AG04450 (cell line): ENCODE measurements at regions of chr17 and their contacts with region 1.

Region 1: DNA sequence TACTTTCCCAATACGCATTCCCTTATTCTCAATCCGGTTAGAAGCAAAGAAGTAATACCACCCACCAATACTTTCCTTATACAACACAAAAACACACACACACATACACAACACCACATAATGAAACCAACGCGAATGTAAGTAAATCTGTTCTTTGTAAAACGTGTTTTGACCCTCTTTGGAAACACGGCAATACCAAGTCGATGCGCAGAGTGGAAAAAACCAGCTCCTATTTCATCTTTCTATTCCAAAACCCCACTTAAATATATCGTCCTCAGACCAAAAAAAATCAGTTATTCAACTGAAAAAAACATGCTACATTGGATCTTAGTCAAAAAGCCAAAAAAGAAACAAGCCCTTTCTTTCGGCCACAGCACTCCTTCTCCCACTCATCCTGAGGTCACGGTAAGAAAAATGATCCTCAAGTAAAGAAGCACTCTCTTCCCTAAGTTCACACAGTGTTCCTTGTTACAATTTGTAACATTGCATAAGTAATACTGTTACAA is 31.0 kb upstream of the ARL4D start:
- DNase-seq: peak; percentile 97
- H3K4me3 ChIP-seq: peak overlapping the region; percentile 35
- H3K27ac ChIP-seq: peak overlapping the region; percentile 97
- H3K27me3 ChIP-seq: no peaks in the 10 kb centered on the region
- CTCF ChIP-seq: no peak

Region 2: DNA sequence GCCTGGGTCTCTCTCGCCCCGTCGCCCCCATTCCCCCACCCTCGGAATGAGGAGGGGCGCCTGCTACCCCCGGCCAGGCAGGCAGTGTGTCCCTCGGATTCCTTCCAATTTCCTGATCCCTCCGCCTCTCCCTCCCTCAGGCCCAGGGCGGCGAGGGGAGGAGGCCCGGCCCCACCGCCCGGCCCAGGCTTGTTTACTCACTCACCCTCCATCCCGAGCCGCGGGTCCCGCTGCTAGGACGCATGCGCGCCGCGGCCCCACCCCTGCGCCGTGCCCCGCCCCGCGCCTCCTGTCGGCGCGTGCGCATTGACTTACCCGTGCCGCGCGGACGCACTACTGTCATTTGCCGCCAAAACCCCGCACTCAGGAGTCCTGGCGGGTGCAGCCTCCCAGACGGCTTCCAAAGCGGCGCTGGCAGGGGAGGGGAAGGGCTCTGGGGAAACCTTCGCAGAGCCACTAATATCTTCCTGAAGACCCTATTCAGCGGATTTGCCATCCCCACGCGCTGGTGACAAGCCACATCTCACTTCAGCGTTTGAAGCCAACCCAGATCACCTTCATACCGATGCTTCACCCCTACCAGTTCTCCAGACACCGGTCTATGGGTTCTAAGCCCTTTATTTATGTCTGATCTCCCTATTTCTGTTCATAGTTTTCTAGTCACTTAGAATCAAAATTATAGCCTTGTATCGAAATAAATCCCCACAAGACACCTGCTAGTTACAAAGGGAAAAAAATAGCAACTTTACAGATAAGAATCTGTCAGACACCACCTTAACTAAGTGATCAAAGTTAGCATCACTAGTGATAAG is 622.8 kb before region 1 on chr17 and contains the start of gene EZH1:
- CTCF ChIA-PET with region 1: no interaction called
- POLR2A ChIA-PET with region 1: no interaction called
- DNase-seq: peak; percentile 61
- H3K4me3 ChIP-seq: peak within 1 kb of the TSS; percentile 84
- H3K27ac ChIP-seq: peak within 1 kb of the TSS; percentile 78
- H3K27me3 ChIP-seq: no peaks in the 10 kb centered on the region
- CTCF ChIP-seq: no peak
- polyA plus RNA-seq, gene EZH1: 18.8 and 26.3 TPM in 2 replicates

Region 3: DNA sequence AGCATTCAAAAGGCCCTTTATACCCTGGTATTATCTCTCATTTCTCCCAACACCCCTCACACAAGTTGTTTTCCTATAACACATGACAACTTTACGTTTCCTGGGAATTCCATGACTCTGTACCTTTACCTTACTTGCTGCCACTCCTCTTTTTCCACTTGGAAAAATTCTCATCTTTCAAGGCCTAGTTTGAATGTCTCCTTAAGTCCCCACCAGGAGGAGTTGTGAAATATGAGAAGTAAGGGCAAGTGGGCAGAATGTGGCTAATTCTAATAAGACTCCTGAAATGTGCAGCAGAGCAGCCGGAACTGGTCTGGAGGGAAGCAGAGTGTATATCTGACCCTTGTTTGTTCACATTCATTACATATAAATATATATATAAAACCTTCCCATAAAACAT is 282.3 kb before region 1 on chr17:
- CTCF ChIA-PET with region 1: no interaction called
- POLR2A ChIA-PET with region 1: no interaction called
- DNase-seq: no peak
- H3K4me3 ChIP-seq: no peak overlapping the region
- H3K27ac ChIP-seq: no peak overlapping the region
- H3K27me3 ChIP-seq: no peaks in the 10 kb centered on the region
- CTCF ChIP-seq: peak; percentile 29

Region 4: GRCh38 chr17:43224146-43224695 is 143.6 kb before region 1 on chr17:
- CTCF ChIA-PET with region 1: no interaction called
- POLR2A ChIA-PET with region 1: no interaction called
- DNase-seq: no peak
- H3K4me3 ChIP-seq: no peak overlapping the region
- H3K27ac ChIP-seq: no peak overlapping the region
- H3K27me3 ChIP-seq: no peaks in the 10 kb centered on the region
- CTCF ChIP-seq: no peak

Region 5: DNA sequence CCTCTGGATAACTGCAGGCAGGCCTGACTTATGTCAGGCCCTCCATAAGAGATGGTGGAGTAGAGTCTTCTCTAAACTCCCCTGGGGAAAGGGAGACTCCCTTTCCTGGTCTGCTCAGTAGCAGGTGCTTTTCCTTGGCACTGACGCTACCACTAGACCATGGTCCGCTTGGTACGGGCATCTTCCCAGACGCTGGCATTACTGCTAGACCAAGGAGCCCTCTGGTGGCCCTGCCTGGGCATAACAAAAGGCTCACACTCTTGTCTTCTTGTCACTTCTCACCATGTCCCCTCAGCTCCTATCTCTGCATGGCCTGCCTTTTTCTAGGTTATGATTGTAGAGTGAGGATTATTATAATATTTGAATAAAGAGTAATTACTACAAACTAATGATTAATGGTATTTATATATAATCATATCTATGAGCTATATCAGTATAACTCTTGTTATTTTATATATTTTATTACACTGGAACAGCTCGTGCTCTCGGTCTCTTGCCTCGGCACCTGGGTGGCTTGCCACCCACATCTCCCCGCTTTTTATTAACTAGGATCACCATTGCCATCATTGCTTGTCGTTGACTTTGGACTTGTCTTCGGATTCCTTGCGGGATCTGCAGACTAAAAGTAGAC is 28.8 kb before region 1 on chr17:
- CTCF ChIA-PET with region 1: interaction called, 4 read pairs
- POLR2A ChIA-PET with region 1: interaction called, 15 read pairs
- DNase-seq: no peak
- H3K4me3 ChIP-seq: no peak overlapping the region
- H3K27ac ChIP-seq: no peak overlapping the region
- H3K27me3 ChIP-seq: no peaks in the 10 kb centered on the region
- CTCF ChIP-seq: peak; percentile 77

Region 6: GRCh38 chr17:43388359-43389045 is 20.7 kb after region 1 on chr17:
- CTCF ChIA-PET with region 1: interaction called, 5 read pairs
- POLR2A ChIA-PET with region 1: interaction called, 91 read pairs
- DNase-seq: peak; percentile 79
- H3K4me3 ChIP-seq: peak overlapping the region; percentile 69
- H3K27ac ChIP-seq: peak overlapping the region; percentile 96
- H3K27me3 ChIP-seq: no peaks in the 10 kb centered on the region
- CTCF ChIP-seq: no peak

Region 7: DNA sequence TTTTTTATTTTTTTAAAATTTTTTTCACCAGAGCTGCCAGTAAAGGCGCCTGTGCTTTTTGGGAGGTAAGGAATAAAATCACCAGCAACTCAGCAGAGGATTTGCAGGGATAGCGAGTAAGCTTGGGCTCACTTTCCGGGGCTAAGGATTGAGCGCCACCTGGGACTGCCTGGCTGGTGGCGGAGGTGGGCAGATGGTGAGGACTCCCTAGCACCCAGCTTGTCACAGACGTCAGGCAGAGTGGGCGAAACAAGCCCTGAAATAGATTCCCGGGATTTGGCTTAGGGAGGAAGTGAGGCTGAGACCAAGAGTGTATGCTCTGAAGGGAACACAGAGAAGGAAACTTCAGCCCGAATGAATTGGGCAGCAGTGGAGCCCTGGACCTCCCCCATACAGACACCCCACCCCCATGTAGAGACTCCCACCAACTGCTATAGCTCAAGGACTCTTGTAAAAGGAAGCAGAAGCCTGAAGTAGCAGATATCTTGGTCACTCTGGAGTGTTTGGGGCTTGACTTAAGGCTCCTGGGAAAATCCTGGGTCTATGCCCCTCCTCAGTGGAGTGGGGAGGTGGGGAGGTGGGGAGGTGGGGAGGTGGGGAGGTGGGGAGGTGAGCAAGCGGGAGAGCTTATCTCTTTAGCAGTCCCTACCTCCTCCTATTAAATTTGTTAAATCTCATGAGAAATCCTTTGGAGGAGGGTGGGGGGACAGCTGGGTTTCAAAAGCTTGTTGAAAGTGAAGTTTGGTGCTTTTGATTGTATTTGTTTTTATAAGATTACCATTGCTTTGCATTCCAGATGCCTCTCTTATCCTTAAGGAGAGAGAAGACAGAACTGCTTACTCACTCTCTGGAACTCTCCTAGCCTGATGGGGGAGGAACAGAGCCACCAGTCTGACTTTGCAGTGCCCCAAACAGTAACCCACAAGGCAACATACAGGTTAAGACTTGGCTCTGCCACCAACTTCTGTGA is 39.2 kb after region 1 on chr17:
- CTCF ChIA-PET with region 1: no interaction called
- POLR2A ChIA-PET with region 1: interaction called, 10 read pairs
- DNase-seq: peak; percentile 54
- H3K4me3 ChIP-seq: no peak overlapping the region
- H3K27ac ChIP-seq: peak overlapping the region; percentile 89
- H3K27me3 ChIP-seq: no peaks in the 10 kb centered on the region
- CTCF ChIP-seq: no peak